Activated naive CD4-positive, alpha-beta T cell treated with anti-CD3 and anti-CD28 coated beads for 36 hours (primary cell): ENCODE measurements at regions of chr9 and their contacts with region 1.

Region 1: DNA sequence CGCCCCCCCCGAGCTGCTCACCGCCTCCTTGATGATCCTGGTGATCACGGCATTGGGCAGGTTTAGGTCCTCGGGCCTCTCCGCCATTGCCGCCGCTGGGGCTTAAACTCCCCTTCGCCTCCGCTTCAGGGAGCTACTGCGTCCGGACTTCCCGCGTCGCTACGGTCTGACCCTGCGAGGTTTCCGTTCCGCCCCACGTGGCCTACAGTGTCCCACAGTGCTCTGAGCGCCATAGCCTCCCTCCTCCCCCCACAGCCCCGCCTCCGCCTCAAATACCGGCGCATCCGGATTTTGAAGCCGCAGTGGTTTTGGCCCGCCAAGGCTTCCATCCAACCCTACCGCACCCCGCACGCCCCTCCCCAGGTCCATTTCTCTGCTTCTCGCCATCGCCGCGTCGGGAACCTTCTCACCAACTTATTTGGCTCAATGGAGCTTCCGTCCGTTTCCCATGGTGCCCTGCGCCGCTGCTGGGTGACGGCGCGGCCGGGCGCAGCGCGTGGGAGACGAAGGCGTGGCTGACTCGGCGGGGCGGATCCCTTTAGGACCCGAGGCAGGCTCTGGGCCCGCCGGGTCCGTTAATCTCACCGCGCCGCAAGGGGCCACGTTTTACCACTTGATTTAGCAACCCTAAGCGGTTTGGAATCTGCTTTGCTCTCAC is at the starts of genes C9orf43 and POLE3:
- DNase-seq: peak; percentile 97
- H3K4me3 Mint-ChIP-seq: peak within 1 kb of the TSS; percentile 99
- H3K27ac Mint-ChIP-seq: peak within 1 kb of the TSS; percentile 100
- H3K4me1 Mint-ChIP-seq: peaks cover 38% of the 10 kb centered on the region
- H3K27me3 Mint-ChIP-seq: no peaks in the 10 kb centered on the region
- total RNA-seq, gene C9orf43: 0.83 to 0.84 TPM
- total RNA-seq, gene POLE3: 34.1 to 37.4 TPM

Region 2: GRCh38 chr9:113309204-113309813 is 101.0 kb before region 1 on chr9:
- CTCF ChIA-PET with region 1: interaction called, 7 read pairs
- intact Hi-C with region 1: loop called (anchors 1 kb)
- DNase-seq: peak; percentile 53
- H3K4me3 Mint-ChIP-seq: no peak overlapping the region
- H3K27ac Mint-ChIP-seq: no peak overlapping the region
- H3K4me1 Mint-ChIP-seq: no peaks in the 10 kb centered on the region
- H3K27me3 Mint-ChIP-seq: no peaks in the 10 kb centered on the region

Region 3: GRCh38 chr9:113349445-113350094 is 60.8 kb before region 1 on chr9 and contains the start of gene BSPRY:
- CTCF ChIA-PET with region 1: interaction called, 3 read pairs
- intact Hi-C with region 1: loop called (anchors 1 kb)
- DNase-seq: peak; percentile 42
- H3K4me3 Mint-ChIP-seq: peak within 1 kb of the TSS; percentile 87
- H3K27ac Mint-ChIP-seq: peak within 1 kb of the TSS; percentile 84
- H3K4me1 Mint-ChIP-seq: peaks cover 61% of the 10 kb centered on the region
- H3K27me3 Mint-ChIP-seq: peaks cover 26% of the 10 kb centered on the region
- total RNA-seq, gene BSPRY: 7.7 to 8.3 TPM

Region 4: DNA sequence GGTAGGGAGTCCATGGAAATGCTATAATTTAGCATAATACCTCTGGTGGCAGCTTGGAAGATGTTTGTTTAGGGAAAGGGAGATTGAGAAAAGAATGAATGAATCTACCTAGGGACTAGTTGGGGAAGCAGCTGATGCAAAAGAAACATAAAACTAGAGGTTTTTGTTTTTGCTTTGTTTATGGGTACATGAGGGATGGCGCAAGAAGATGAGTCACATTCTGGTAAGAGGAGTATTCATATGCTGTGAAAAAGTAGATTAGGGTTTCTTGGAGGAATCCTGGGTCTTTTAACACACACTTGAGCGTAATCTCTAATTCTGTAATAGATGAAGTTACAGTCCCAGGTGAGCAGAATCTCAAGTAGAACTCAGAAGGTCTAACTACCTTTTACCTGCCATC is 17.3 kb after region 1 on chr9:
- CTCF ChIA-PET with region 1: no interaction called
- intact Hi-C with region 1: no loop called
- DNase-seq: no peak
- H3K4me3 Mint-ChIP-seq: no peak overlapping the region
- H3K27ac Mint-ChIP-seq: no peak overlapping the region
- H3K4me1 Mint-ChIP-seq: no peaks in the 10 kb centered on the region
- H3K27me3 Mint-ChIP-seq: peaks cover 4% of the 10 kb centered on the region

Region 5: GRCh38 chr9:113511856-113512761 is 101.8 kb after region 1 on chr9:
- CTCF ChIA-PET with region 1: interaction called, 3 read pairs
- intact Hi-C with region 1: loop called (anchors 1 kb)
- DNase-seq: peak; percentile 82
- H3K4me3 Mint-ChIP-seq: peak overlapping the region; percentile 41
- H3K27ac Mint-ChIP-seq: peak overlapping the region; percentile 85
- H3K4me1 Mint-ChIP-seq: peaks cover 50% of the 10 kb centered on the region
- H3K27me3 Mint-ChIP-seq: peaks cover 2% of the 10 kb centered on the region